AG04449 (cell line): ENCODE measurements at regions of chr9 and their contacts with region 1.

Region 1: GRCh38 chr9:107465467-107466451 is 23.8 kb downstream of the KLF4 start:
- DNase-seq: no peak
- H3K4me3 ChIP-seq: peak overlapping the region; percentile 61
- CTCF ChIP-seq: peak; percentile 77

Region 2: GRCh38 chr9:107312376-107313050 is 153.2 kb before region 1 on chr9:
- CTCF ChIA-PET with region 1: no interaction called
- POLR2A ChIA-PET with region 1: no interaction called
- DNase-seq: no peak
- H3K4me3 ChIP-seq: no peak overlapping the region
- CTCF ChIP-seq: no peak

Region 3: GRCh38 chr9:107455425-107456135 is 10.2 kb before region 1 on chr9:
- CTCF ChIA-PET with region 1: interaction called, 11 read pairs
- POLR2A ChIA-PET with region 1: no interaction called
- DNase-seq: no peak
- H3K4me3 ChIP-seq: no peak overlapping the region
- CTCF ChIP-seq: no peak

Region 4: DNA sequence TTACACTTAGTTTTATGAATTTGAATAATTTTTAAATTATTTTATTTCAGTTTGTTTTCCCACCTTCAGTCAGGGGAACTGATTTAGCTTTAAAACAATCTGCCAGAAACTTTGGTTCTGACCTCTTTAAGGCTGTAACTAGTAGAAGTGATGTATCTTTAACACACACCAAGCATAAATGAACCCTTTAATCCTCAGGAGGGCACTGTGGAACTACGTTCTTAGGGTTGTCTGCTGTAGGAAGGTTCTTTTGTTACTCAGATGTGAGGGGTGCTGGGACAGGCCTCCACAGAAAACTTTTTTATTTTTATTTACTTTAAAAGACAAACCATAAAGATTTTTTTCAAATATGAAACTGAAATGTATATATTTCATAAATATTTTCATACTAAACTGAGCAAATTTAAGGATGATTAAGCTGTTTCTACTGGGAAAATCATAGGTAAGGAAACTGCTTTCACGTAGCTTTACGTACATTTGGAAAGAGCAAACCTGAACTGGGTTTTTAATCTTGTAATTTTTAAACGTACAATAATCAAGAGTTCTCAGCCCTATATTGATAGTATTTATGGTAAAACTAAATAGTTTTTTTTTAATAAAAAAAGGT is 18.5 kb after region 1 on chr9:
- CTCF ChIA-PET with region 1: interaction called, 29 read pairs
- POLR2A ChIA-PET with region 1: no interaction called
- DNase-seq: peak; percentile 34
- H3K4me3 ChIP-seq: no peak overlapping the region
- CTCF ChIP-seq: peak; percentile 61

Region 5: GRCh38 chr9:108272349-108272899 is 806.7 kb after region 1 on chr9:
- CTCF ChIA-PET with region 1: interaction called, 12 read pairs
- POLR2A ChIA-PET with region 1: no interaction called
- DNase-seq: no peak
- H3K4me3 ChIP-seq: peak overlapping the region; percentile 40
- CTCF ChIP-seq: peak; percentile 37

Region 6: DNA sequence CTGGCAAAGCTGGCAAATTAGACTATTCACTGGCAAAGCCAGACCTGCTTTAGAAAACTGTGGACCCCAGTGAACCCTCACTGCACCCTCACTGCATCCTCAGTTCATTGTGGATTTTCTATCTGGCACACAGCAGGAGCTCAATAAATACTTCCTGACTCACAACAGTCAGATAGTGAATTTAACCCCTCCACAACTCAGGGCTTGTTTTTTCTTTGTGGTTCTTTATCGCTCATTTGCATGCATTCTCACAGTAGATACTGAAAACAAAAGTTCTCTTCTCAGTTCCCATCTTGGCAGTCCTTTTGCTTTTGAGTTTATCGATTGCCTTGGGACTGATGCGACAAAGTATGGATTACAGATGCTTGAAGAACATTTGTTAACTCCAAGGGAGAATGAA is 1290.2 kb after region 1 on chr9:
- CTCF ChIA-PET with region 1: interaction called, 33 read pairs
- POLR2A ChIA-PET with region 1: no interaction called
- DNase-seq: no peak
- H3K4me3 ChIP-seq: no peak overlapping the region
- CTCF ChIP-seq: no peak

Region 7: DNA sequence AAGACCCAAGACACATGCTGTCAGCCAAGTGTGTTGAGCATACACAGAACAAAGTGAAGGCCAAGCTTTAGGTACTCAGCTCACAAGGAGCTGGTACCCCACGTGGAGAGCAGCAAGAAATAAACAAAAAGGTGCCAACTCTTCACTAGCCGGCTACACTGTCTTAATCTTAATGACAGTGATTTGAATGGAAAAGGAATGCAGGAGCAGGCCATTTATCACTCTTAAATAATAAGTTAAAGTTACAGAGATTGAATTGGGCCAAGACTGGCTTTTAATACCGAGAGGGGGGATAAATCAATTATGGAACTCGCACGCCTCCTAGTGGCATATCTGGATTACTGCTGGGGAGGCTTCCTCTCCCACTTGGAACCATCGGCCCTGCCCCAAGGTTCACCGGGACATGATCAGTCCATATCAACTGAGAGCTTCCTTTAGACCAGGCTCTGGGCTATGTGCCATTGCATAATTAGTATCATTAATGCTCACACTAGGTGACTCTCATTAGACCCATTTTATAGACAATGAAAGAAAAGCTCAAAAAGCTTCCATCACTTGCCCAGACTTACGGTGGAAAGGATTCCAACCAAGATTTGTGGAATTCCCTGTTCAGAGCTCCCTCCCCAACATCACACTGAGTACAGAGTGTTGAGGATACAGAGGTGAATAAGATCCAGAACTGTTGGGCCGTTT is 1296.0 kb after region 1 on chr9:
- CTCF ChIA-PET with region 1: interaction called, 33 read pairs
- POLR2A ChIA-PET with region 1: no interaction called
- DNase-seq: no peak
- H3K4me3 ChIP-seq: no peak overlapping the region
- CTCF ChIP-seq: peak; percentile 80